Activated T-helper 1 cell treated with anti-CD3 and anti-CD28 coated beads, Interleukin-12 subunit alpha, Interleukin-12 subunit beta, Interleukin-2, Interleukin-4 antibody, amounts not matched to agents 30 ng/mL and 10 ng/mL and 1 ng/mL, durations not matched to agents 14 hours and 24 hours and 36 hours (primary cell): ENCODE measurements at regions of chr6 and their contacts with region 1.

Region 1: GRCh38 chr6:31619805-31620585 is 520 bp upstream of the PRRC2A start:
- DNase-seq: peak; percentile 98
- H3K4me3 Mint-ChIP-seq: peak overlapping the region; percentile 79
- H3K27ac Mint-ChIP-seq: peak overlapping the region; percentile 98
- H3K4me1 Mint-ChIP-seq: peaks cover 43% of the 10 kb centered on the region
- H3K27me3 Mint-ChIP-seq: no peaks in the 10 kb centered on the region

Region 2: GRCh38 chr6:31203345-31203979 is 416.5 kb before region 1 on chr6:
- intact Hi-C with region 1: loop called (anchors 1 kb)
- DNase-seq: peak; percentile 54
- H3K4me3 Mint-ChIP-seq: peak overlapping the region; percentile 90
- H3K27ac Mint-ChIP-seq: peak overlapping the region; percentile 95
- H3K4me1 Mint-ChIP-seq: peaks cover 54% of the 10 kb centered on the region
- H3K27me3 Mint-ChIP-seq: no peaks in the 10 kb centered on the region

Region 3: DNA sequence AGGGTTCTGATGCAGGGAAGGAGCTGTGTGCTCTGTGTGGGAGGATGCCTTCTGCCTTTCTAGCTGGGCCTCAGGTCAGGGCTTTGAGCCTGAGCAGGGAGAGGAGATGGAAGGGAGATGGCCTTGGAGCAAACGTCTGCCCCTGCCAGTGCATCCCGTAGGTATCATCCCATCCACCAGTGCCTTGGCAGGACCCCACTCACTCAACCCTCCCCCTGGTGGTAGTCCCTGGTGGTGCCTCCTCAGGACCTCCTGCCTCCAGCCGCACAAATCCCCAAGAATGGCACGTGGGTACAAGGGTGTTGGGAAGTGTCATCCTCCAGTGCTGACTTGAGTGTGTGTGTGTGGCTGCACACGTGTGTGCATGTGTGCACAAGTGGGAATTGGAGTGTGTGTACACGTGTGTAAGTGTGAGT is 145.1 kb before region 1 on chr6:
- intact Hi-C with region 1: no loop called
- DNase-seq: no peak
- H3K4me3 Mint-ChIP-seq: no peak overlapping the region
- H3K27ac Mint-ChIP-seq: no peak overlapping the region
- H3K4me1 Mint-ChIP-seq: peaks cover 37% of the 10 kb centered on the region
- H3K27me3 Mint-ChIP-seq: no peaks in the 10 kb centered on the region

Region 4: DNA sequence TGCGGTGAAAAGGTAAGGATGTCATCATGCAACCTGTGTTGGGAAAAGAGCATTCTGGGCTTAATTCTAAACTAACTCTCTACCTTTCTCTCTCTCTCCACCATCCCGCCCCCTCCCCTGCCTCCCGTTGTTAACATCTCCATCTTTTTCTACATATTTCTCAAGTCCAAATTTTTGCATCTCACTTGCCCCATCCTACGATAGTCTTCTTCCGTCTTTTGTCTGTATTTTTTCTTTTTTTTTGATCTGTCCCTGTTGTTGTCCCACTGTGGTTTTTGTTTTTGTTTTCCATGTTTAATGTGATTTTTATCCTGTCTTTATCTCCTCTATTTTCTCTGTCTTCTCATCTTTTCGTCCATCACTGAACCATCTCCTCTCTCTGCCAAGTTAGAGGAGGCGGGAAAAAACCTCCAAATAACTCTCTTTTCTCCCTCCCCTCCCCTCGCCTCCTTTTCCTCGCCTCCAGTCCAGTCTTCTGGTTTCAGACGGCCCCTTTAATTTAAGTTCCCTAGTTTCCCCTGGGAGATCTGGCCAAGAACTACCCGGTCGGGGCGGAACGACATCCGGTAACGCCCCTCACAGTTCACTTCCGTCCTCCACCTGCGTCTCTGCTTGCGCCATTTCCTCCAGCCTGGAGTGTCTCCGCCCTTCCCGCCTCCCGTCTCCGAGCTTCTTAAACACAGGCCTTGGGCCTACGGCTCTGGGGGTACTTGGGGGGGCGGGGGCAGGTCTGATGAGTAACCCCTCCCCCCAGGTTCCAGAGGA is 72.9 kb before region 1 on chr6 and contains the start of gene NFKBIL1:
- intact Hi-C with region 1: loop called (anchors 1 kb)
- DNase-seq: peak; percentile 88
- H3K4me3 Mint-ChIP-seq: peak within 1 kb of the TSS; percentile 87
- H3K27ac Mint-ChIP-seq: peak within 1 kb of the TSS; percentile 82
- H3K4me1 Mint-ChIP-seq: peaks cover 36% of the 10 kb centered on the region
- H3K27me3 Mint-ChIP-seq: peaks cover 3% of the 10 kb centered on the region
- total RNA-seq, gene NFKBIL1: 18.2 and 18.9 TPM in 2 replicates

Region 5: DNA sequence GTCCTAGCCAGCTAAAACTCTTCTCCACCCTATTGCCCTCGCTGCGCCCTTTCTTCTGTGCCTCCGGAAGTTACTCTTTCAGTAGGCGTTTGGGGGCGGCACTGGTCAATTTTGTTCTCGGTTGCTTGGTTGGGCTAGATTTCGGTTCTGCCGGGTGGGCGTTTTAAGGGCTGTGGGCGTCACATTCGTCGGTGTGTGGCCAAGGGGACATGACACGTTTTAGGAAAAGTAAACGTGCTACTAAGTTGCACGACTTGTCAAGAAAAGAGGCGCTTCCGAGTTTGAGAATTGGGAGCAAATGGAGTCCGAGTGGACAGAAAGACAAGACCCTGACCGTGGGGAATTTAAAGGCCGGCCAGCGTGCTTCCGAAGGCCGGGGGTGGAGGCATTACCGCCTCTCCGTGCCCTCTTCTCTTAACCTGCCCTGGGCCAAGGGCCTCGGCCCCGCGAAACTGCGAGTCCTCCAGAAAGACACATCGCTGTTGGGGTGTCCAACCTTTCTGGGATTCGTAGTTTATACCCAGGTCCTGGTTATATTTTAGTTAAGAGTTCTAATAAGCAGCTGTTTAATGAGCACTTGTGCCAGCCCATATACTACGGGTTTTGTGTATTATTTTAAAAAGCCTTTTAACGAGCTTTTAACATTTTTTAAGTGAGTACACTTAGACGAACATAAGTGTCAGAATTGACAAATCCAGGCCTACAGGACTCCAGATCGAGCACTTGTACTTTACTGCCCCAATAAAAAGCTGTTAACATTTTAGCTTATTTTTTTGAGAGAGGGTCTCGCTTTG is 33.1 kb after region 1 on chr6:
- intact Hi-C with region 1: loop called (anchors 1 kb)
- DNase-seq: peak; percentile 81
- H3K4me3 Mint-ChIP-seq: peak overlapping the region; percentile 93
- H3K27ac Mint-ChIP-seq: peak overlapping the region; percentile 100
- H3K4me1 Mint-ChIP-seq: peaks cover 48% of the 10 kb centered on the region
- H3K27me3 Mint-ChIP-seq: no peaks in the 10 kb centered on the region

Region 6: GRCh38 chr6:31827286-31828079 is 207.5 kb after region 1 on chr6 and contains the start of gene HSPA1B:
- intact Hi-C with region 1: loop called (anchors 1 kb)
- DNase-seq: peak; percentile 95
- H3K4me3 Mint-ChIP-seq: peak within 1 kb of the TSS; percentile 83
- H3K27ac Mint-ChIP-seq: peak within 1 kb of the TSS; percentile 93
- H3K4me1 Mint-ChIP-seq: peaks cover 41% of the 10 kb centered on the region
- H3K27me3 Mint-ChIP-seq: no peaks in the 10 kb centered on the region
- total RNA-seq, gene HSPA1B: 152 and 155 TPM in 2 replicates

Region 7: DNA sequence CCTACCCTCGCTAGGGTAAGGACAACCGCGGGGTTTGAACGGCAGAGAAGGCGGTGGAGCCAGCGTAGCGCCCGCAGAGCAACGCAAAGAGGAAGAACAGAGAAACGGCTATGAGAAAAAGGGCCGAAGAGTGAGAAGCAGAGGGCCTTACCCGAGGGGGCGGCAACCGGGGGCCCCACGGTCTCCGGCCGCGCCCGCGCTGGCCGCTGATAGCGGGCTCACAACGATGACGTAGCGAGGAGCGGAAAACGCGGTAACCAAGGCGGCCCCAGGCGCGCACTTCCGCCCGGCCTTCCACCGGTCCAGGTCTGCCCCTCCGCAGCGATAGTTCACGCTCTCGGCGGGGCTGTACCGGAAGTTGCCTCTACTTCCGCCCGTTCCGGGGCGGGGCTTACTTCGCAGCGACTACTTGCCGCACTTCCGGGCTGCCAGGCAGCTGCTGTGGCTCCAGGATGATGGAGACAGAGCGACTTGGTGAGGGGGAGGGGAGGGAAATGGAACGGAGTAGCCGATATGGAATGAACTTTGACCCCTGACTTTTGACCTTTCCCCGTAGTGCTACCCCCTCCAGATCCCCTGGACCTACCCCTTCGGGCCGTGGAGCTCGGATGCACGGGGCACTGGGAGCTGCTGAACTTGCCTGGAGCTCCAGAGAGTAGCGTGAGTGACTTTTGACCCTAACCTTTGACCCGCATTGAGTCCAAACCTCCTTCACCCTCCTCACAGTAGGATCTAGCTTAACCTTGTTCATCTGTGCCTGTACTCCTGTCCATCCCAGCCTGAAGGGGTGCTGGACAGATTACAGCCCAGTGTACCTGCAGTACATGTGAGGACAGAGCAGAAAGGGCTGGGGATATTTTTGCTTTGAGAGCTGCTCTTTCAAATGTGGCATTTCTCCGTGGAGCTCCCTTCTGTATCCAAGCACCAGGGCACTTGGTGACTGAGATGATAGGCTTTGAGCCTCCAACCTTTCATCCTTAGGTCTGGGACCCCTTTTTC is 339.0 kb after region 1 on chr6 and contains the starts of genes NELFE and SKIC2:
- intact Hi-C with region 1: loop called (anchors 1 kb)
- DNase-seq: peak; percentile 99
- H3K4me3 Mint-ChIP-seq: peak within 1 kb of the TSS; percentile 98
- H3K27ac Mint-ChIP-seq: peak within 1 kb of the TSS; percentile 98
- H3K4me1 Mint-ChIP-seq: peaks cover 46% of the 10 kb centered on the region
- H3K27me3 Mint-ChIP-seq: no peaks in the 10 kb centered on the region
- total RNA-seq, gene NELFE: 92.3 and 97.7 TPM in 2 replicates
- total RNA-seq, gene SKIC2: 85.8 and 101 TPM in 2 replicates